Activated naive CD4-positive, alpha-beta T cell treated with anti-CD3 and anti-CD28 coated beads for 36 hours (primary cell): ENCODE measurements at regions of chr10 and their contacts with region 1.

Region 1: DNA sequence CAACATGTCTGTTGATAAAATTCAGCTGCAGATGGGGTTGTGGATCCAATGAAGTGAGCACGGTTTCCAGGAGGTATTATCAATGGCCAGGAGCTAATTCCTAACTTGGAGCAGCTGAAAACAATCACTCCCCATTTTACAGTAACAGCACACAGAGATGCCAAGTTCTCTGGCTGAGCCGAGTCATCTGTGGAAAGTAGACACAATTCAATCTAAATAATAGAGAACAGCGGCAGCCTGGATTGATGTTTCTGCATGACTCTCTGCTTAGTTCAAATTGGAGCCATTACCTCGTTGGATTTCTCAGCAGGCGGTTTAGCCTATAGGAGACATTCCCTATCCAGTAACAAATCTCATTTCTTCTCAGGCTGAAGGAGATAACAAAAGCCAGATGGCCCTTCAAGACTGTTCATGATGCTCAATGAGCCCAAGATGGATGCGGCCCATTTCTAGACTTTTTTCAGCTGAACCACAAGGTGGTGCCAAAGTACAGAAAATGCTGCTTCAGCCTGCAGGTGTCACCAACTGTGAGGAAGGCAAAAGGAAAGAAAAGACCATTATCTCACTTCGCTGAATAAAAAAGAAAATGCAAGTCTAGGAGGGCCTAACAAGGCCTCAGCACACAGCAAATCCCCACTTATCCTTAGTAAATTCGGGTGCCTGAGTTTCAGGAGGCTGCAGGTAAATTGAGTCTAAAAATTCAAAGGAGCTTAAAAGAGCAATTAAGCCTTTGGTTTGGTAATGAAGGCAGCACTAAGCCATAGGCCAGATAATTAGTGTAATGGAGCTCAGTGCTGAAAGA is 83.7 kb downstream of the SLC16A9 start:
- DNase-seq: peak; percentile 59
- H3K4me3 Mint-ChIP-seq: no peak overlapping the region
- H3K27ac Mint-ChIP-seq: no peak overlapping the region
- H3K4me1 Mint-ChIP-seq: peaks cover 3% of the 10 kb centered on the region
- H3K27me3 Mint-ChIP-seq: peaks cover 2% of the 10 kb centered on the region

Region 2: DNA sequence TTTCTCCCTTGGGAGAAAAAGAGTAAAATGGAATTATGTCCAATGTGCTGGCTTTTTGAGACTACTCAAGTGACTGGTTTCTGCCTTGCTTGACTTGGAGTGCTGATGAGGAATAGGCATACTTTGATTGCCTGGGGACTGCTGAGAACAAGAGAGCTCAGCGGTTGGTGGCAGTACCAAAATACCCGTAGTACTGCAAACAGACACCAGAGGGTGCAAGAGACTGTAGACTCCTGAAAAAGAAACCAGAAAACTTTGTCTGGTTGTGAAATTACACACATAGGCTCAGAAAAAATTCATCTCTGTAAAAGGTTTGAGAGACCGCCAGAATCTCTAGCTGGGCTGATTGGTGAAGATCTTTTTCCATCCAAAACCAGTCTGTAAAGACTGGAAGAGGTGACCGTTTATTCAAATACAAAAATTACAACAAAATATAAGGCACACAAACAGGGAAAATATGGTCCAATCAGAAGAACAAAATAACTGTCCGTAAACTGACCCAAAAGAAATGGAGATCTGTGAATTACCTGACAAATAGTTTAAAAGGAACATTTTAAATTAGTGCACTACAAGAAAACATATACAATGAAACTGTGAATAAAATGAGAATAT is 1094.7 kb before region 1 on chr10:
- CTCF ChIA-PET with region 1: interaction called, 4 read pairs
- intact Hi-C with region 1: loop called (anchors 1 kb)
- DNase-seq: peak; percentile 71
- H3K4me3 Mint-ChIP-seq: no peak overlapping the region
- H3K27ac Mint-ChIP-seq: no peak overlapping the region
- H3K4me1 Mint-ChIP-seq: no peaks in the 10 kb centered on the region
- H3K27me3 Mint-ChIP-seq: peaks cover 20% of the 10 kb centered on the region

Region 3: GRCh38 chr10:59240582-59241183 is 385.2 kb before region 1 on chr10:
- CTCF ChIA-PET with region 1: interaction called, 4 read pairs
- intact Hi-C with region 1: loop called (anchors 1 kb)
- DNase-seq: no peak
- H3K4me3 Mint-ChIP-seq: no peak overlapping the region
- H3K27ac Mint-ChIP-seq: no peak overlapping the region
- H3K4me1 Mint-ChIP-seq: no peaks in the 10 kb centered on the region
- H3K27me3 Mint-ChIP-seq: no peaks in the 10 kb centered on the region

Region 4: GRCh38 chr10:59557642-59558041 is 68.3 kb before region 1 on chr10:
- CTCF ChIA-PET with region 1: no interaction called
- intact Hi-C with region 1: no loop called
- DNase-seq: no peak
- H3K4me3 Mint-ChIP-seq: no peak overlapping the region
- H3K27ac Mint-ChIP-seq: no peak overlapping the region
- H3K4me1 Mint-ChIP-seq: no peaks in the 10 kb centered on the region
- H3K27me3 Mint-ChIP-seq: peaks cover 11% of the 10 kb centered on the region

Region 5: DNA sequence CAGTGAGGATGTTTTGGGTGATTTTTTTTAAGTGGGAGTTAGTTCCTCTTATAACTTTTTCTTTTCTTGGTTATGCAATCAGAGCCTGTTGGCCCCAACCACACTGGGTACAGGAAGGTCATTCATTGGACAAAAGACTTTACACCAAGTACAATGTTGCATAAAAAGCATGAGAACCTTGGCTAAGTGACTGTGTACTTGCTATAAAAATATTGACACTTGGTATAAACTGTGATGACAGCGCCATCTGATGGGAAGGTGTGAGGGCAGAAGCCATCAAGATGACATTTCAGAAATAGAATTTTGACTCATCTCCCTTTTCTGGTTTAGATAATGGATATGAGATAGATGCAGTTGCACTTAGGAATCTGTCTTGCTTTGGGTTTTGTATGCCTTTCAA is 406.8 kb after region 1 on chr10:
- CTCF ChIA-PET with region 1: interaction called, 13 read pairs
- intact Hi-C with region 1: loop called (anchors 1 kb)
- DNase-seq: peak; percentile 79
- H3K4me3 Mint-ChIP-seq: no peak overlapping the region
- H3K27ac Mint-ChIP-seq: no peak overlapping the region
- H3K4me1 Mint-ChIP-seq: no peaks in the 10 kb centered on the region
- H3K27me3 Mint-ChIP-seq: no peaks in the 10 kb centered on the region

Region 6: DNA sequence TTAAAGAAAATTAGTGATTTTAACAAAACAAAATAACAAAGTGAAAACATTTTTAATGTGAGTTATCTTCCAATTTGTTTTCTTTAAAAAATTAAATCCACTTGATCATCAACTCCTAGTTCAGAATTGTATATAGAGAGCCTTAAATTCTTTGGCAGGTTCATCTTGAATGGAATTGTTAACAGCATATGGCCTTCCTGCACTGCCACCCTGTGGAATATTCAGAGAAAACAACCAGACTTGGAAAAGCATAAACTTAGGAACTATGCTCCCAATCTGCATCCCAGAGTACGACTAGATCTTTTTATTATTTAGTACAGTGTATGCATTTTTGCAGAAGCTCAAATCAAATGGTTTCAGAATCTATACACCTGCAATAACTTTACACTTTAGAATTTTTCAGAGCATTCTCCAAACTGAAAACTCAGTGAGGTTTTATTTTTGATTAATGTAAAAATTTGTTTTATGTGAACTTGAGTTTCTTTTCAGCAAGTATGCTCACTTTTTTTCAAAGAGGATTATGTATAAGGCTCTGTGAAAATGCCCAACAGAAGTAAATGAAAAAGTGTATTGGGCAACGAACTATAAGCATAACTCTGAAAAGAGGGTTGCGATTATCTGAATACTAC is 808.6 kb after region 1 on chr10:
- CTCF ChIA-PET with region 1: interaction called, 3 read pairs
- intact Hi-C with region 1: loop called (anchors 1 kb)
- DNase-seq: peak; percentile 33
- H3K4me3 Mint-ChIP-seq: no peak overlapping the region
- H3K27ac Mint-ChIP-seq: no peak overlapping the region
- H3K4me1 Mint-ChIP-seq: no peaks in the 10 kb centered on the region
- H3K27me3 Mint-ChIP-seq: no peaks in the 10 kb centered on the region